Activated T-helper 1 cell treated with anti-CD3 and anti-CD28 coated beads, Interleukin-12 subunit alpha, Interleukin-12 subunit beta, Interleukin-2, Interleukin-4 antibody, amounts not matched to agents 30 ng/mL and 10 ng/mL and 1 ng/mL, durations not matched to agents 14 hours and 24 hours and 36 hours (primary cell): ENCODE measurements at regions of chr2 and their contacts with region 1.

Region 1: GRCh38 chr2:236545814-236546480 is 23.7 kb upstream of the ACKR3 start:
- DNase-seq: no peak
- H3K4me3 Mint-ChIP-seq: peak overlapping the region; percentile 80
- H3K27ac Mint-ChIP-seq: peak overlapping the region; percentile 96
- H3K4me1 Mint-ChIP-seq: peaks cover 82% of the 10 kb centered on the region
- H3K27me3 Mint-ChIP-seq: no peaks in the 10 kb centered on the region

Region 2: DNA sequence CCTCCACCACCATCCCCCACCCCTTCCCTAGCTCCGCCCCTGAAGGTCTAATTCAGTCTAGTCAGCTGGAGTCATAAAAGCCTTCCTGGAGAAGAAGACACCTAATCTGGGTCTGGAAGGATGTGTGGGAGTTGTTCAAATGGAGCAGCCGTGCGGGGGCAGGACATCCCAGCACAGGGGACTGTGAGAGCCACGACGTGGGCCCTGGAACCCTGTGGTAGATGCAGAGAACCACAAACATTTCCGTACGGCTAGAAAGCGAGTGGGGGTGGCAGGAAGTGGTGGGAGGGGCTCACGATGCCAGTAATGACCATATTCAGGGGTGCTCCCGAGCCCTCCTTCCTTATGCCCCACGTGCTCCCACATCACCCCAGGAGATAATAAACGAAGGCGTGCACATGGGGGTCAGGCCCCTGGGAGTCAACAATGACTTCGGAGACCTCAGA is 888.9 kb after region 1 on chr2:
- intact Hi-C with region 1: loop called (anchors 10 kb)
- DNase-seq: peak; percentile 62
- H3K4me3 Mint-ChIP-seq: peak overlapping the region; percentile 82
- H3K27ac Mint-ChIP-seq: peak overlapping the region; percentile 91
- H3K4me1 Mint-ChIP-seq: peaks cover 91% of the 10 kb centered on the region
- H3K27me3 Mint-ChIP-seq: peaks cover 5% of the 10 kb centered on the region